Activated CD8-positive, alpha-beta T cell treated with anti-CD3 and anti-CD28 coated beads, Interleukin-2, amount 10 ng/mL, durations not matched to agents 7 days and 5 days (primary cell): ENCODE measurements at regions of chr18 and their contacts with region 1.

Region 1: DNA sequence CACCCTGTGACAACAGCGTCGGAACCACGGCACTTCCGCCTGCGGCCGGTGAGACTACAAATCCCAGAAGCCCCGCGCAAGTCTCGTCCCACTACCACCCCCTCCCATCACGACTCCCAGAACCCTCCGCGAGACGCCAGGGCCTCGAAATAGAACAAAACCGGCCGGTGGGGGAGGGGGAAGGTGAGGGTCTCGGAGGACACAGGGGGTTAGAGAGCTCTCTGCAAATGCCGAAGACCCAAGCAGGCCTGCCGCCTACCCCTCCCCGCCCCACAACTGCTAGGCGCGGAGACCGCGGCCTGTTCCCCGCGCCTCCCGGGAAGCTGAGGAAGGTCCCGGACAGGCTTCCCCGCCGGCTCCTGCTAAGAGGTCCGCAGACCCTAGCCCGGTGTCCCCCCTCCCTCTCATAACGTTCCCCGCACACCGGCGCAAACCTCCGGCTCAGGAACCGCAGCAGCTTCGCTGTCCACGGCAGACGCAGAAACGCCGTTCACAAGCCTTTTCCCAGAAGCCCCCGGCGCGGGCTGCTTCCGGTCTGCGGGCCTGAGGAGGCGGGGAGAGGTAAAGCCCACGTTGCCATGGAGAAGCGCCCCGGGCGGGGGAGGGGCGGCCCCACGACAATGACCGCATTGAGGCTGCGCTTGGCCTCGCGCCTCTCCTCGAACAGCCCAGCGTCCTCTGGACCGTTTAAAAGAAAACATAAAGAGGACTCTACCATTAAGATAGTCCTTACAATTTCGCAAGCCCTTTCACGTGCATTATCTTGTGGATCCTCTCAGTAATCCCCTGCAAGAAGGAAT is at the start of gene ZNF24:
- DNase-seq: peak; percentile 95
- ATAC-seq: peak; percentile 85
- H3K4me3 Mint-ChIP-seq: peak within 1 kb of the TSS; percentile 85
- H3K27ac Mint-ChIP-seq: peak within 1 kb of the TSS; percentile 89
- H3K4me1 Mint-ChIP-seq: peaks cover 35% of the 10 kb centered on the region
- H3K27me3 Mint-ChIP-seq: no peaks in the 10 kb centered on the region
- total RNA-seq, gene ZNF24: 48.8 to 53.2 TPM

Region 2: GRCh38 chr18:35240664-35241447 is 103.3 kb before region 1 on chr18 and contains the start of gene ZNF397:
- CTCF ChIA-PET with region 1: no interaction called
- POLR2A ChIA-PET with region 1: interaction called, 15 read pairs
- DNase-seq: peak; percentile 96
- ATAC-seq: peak; percentile 99
- H3K4me3 Mint-ChIP-seq: peak within 1 kb of the TSS; percentile 87
- H3K27ac Mint-ChIP-seq: peak within 1 kb of the TSS; percentile 94
- H3K4me1 Mint-ChIP-seq: peaks cover 8% of the 10 kb centered on the region
- H3K27me3 Mint-ChIP-seq: no peaks in the 10 kb centered on the region
- total RNA-seq, gene ZNF397: 11.3 to 12.7 TPM

Region 3: DNA sequence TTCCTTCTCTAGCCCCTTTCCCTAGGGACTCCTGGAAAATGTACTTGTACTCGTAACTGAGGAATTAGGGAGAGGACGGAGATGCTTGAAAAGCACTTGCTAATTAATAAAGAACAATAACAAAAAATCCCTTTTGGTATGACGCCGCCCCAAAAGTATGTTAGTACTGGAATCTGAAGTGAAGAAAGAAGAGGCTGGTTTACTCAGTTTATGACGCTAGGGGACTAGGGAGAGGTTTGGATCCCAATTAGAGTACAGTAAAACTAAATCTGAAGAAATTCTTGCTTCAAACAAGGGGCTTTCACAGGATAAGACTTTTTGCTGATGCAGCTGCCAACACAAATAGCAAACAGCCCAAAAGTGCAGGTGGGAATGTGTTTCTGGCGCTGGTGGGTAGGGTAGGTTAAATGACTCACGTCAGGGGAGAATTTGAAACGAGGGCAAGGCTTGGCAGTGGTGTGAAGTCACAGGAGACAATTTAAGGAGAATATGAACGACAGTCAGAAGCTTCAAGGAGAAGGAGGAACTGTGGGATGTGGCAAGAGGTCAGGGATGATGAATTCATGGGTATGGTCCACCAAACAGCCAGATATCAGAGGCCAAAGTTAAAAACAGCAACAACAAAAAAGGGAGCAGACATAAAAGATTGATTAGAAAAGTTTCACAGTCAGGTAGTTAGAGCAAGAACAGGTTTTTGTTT is 34.2 kb after region 1 on chr18:
- CTCF ChIA-PET with region 1: no interaction called
- POLR2A ChIA-PET with region 1: no interaction called
- DNase-seq: no peak
- ATAC-seq: no peak
- H3K4me3 Mint-ChIP-seq: no peak overlapping the region
- H3K27ac Mint-ChIP-seq: no peak overlapping the region
- H3K4me1 Mint-ChIP-seq: peaks cover 12% of the 10 kb centered on the region
- H3K27me3 Mint-ChIP-seq: peaks cover 17% of the 10 kb centered on the region